Heart left ventricle (tissue), 16 donors: ENCODE measurements at regions of chr22 and their contacts with region 1.

Region 1: DNA sequence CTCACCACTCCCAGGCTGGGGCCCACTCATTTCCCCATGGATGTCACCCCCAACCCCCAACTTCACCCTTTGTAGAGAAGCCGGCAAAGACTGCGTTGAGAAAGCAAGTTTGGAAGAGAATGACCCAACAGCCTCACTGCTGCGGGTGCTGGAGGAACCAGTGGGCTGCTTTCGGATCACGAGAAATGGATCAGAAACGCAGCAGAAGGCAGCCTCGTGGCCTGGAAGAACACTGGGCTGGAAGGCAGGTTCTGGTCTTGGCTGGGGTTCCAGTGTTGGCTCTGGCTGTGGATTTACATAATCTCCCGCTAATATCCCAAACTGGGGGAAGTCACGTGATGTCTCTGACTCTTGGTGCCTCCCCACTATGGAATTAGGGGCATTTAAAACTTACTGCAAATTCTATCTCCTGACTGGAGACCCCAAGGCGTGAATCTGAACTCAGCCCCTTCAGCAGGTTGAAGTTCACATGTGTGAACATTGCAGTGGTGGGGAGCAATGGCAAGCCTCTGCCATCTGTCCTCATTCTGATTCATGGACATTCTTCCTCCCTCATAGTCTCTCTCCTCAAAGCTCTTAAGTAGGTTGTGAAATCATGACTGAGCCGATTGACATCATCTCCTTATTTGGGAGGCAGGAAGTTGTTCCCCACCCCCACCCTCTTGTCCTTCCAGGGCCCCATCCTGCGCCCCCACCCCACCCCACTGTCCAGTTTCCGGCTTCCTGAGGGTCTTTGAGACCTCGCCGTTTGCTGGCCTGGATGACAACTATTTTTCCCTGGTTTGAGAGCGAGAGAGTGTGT is 37.0 kb upstream of the TIMP3 start:
- DNase-seq: peak; percentile 38 to 76 (median 72)
- ATAC-seq: peak; percentile 22 to 81 (median 70)
- H3K4me3 ChIP-seq: no peak overlapping the region
- H3K27ac ChIP-seq: peak overlapping the region; percentile 64 to 89 (median 72)
- H3K4me1 ChIP-seq: peaks cover 5 to 53% (median 33%) of the 10 kb centered on the region in 12 donors
- H3K27me3 ChIP-seq: peaks cover 0 to 3% (median 0%) of the 10 kb centered on the region in 9 donors
- CTCF ChIP-seq: no peak
- POLR2A ChIP-seq: no peak

Region 2: DNA sequence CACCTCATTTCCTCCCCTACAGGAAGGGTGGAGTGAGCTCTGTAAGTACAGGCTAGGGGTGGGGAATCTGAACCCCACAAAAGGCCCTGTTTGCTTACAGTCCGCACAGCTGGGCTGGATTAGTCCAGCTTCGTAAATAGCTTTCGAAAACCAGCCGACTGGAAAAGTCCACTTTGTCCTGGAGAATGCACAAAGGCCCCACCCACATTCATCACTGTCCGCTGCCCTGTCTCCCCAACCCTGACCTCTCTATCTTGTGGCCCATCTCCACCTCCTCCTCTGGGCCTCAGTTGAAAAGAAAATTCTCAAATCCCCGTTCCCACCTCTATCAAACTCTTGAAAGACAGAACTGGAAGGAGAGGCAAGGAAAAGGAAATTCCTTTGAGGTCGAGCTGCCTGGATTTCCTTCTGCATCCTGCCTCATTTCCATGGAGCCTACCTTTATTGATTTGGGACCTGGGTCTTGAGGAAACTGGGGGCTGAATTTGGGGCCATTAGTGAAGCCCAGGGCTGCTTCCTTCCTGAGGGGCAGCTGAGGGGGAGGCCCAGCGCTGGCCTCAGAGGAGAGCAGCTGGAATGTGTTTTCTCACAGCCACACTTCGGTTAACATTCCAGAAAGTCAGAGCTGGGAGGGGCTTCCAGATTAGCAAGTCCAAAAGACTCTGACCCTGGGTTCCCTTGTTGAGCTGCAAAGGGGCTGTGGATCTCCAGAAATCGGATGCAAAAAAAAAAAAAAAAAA is 142.4 kb before region 1 on chr22:
- intact Hi-C with region 1: loop called in 2 of 10 experiments (anchors 5 kb)
- DNase-seq: peak in 4 of 5 donors; percentile 58 to 76 (median 74)
- ATAC-seq: peak; percentile 49 to 66 (median 62)
- H3K4me3 ChIP-seq: no peak overlapping the region
- H3K27ac ChIP-seq: peak overlapping the region; percentile 76 to 98 (median 90)
- H3K4me1 ChIP-seq: peaks cover 17 to 90% (median 64%) of the 10 kb centered on the region in 12 donors
- H3K27me3 ChIP-seq: no peaks in the 10 kb centered on the region
- CTCF ChIP-seq: no peak
- POLR2A ChIP-seq: no peak

Region 3: DNA sequence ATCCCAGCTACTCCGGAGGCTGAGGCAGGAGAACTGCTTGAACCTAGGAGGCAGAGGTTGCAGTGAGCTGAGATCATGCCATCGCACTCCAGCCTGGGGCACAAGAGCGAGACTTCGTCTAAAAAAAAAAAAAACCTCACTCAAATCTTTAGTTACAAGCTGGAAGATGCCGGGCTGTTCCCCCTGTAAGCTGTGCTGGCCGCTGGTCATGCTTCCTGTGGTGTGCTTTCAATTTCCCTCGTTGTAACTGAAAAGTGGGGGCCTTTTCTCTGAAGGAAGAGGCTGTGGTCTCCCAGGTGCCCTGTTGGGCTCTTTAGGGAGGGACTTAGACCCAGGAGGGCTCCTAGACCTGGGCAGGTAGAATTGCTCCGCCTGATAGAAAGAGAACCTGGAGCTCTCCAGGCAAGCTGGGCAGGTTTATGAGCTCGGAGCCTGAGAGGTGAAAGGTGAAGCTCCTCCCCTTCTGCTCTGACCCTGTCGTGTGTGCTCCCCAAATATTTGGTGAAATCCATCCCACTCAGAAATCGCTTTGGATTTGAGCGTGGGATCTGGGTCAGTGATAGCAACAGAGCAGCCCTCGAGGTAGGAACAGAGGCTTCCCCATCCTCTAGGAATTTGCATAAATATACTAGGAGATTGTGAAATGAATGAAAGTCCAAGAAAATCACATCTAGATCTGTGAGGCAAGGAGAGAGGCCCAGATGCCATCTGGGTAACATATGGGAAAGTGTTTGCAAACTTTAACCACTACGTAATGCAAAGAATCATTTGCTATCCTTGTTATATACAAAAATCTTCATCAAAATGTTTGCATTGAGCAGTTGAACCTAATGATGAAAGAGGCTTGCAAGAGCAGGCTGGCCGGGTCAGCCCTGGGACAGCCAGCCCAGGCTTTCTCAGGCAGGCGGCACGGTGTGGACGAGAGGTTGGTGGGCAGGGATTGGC is 135.6 kb before region 1 on chr22:
- intact Hi-C with region 1: loop called in 2 of 10 experiments (anchors 5 kb)
- DNase-seq: no peak
- ATAC-seq: no peak
- H3K4me3 ChIP-seq: no peak overlapping the region
- H3K27ac ChIP-seq: peak overlapping the region; percentile 55 to 96 (median 83)
- H3K4me1 ChIP-seq: peaks cover 9 to 71% (median 36%) of the 10 kb centered on the region in 12 donors
- H3K27me3 ChIP-seq: no peaks in the 10 kb centered on the region
- CTCF ChIP-seq: no peak
- POLR2A ChIP-seq: no peak

Region 4: GRCh38 chr22:32660292-32660691 is 104.2 kb before region 1 on chr22:
- intact Hi-C with region 1: loop called in 1 of 10 experiments (anchors 10 kb)
- DNase-seq: peak; percentile 66 to 79 (median 73)
- ATAC-seq: peak in 3 of 4 donors; percentile 64 to 79 (median 78)
- H3K4me3 ChIP-seq: no peak overlapping the region
- H3K27ac ChIP-seq: peak overlapping the region in 3 of 12 donors; percentile 32 to 69 (median 42)
- H3K4me1 ChIP-seq: peaks cover 0 to 27% (median 0%) of the 10 kb centered on the region in 12 donors
- H3K27me3 ChIP-seq: no peaks in the 10 kb centered on the region
- CTCF ChIP-seq: peak; percentile 66 to 88 (median 74)
- POLR2A ChIP-seq: no peak

Region 5: DNA sequence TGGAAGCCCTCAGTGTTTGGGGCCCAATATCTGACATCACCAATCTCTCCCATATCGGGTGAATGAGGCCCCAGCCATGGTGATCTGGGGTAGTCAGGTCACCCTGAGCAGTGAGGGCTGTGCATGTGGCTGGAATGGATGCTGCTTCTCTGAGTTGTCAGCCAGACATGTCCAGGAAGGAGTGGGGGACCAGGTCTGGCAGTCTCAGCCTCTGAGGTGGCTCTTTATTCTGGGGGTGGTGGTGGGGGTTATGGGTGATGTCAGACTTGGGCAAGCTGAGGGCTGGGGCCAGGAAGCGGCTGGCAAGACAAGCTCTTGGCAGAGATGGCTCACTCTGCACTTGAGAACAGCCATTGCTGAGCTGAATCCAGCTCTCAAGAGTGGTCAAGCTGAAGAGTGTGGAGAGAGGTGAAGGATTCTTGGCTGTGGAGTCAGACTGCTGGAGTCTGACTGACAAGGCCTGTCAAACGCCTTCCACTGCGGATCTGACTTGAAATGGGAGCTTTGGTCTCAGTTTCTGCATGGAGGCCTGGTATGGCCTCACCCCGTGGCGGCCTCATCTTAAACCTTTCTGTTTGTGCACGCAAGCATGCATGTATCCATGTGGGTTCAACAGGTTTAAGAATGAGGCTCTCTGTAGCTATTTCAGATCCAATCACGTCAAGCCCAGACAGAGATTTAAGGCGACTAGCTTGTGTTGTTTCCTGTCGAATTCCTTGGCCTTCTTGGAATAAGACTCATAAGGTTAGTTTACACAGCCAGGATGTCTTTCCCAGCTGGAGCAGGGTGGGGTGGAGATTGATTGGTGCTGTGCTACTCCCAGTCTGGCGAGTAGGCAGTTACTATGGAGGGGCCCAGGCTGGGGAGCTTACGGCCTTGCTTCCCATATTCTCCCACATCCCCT is 46.9 kb before region 1 on chr22:
- intact Hi-C with region 1: loop called in 2 of 10 experiments (anchors 5 kb)
- DNase-seq: peak in 4 of 5 donors; percentile 57 to 71 (median 62)
- ATAC-seq: peak; percentile 62 to 95 (median 79)
- H3K4me3 ChIP-seq: no peak overlapping the region
- H3K27ac ChIP-seq: peak overlapping the region; percentile 9 to 82 (median 71)
- H3K4me1 ChIP-seq: peaks cover 0 to 41% (median 21%) of the 10 kb centered on the region in 12 donors
- H3K27me3 ChIP-seq: no peaks in the 10 kb centered on the region
- CTCF ChIP-seq: no peak
- POLR2A ChIP-seq: no peak

Region 6: DNA sequence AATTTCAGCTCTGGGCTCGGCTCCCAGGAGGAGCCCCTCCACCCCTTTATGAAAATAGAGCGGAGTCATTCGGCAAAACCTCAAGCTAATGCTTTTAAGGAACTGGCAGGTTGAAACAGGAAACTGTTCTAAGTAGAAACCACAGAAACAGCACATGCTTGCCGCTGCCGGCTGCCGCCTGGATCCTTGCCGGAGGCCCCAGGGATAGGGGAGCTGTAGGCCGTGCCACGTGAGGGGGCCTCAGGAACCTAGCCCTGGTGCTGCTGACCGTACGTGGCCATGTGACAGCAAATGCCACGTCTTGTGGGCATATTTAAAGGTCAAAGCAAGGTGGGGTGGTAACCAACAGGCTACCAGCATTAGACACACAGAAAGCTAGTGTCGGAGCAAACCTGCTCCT is 40.9 kb before region 1 on chr22:
- intact Hi-C with region 1: loop called in 2 of 10 experiments (anchors 5 kb)
- DNase-seq: peak; percentile 69 to 87 (median 76)
- ATAC-seq: peak; percentile 68 to 89 (median 82)
- H3K4me3 ChIP-seq: no peak overlapping the region
- H3K27ac ChIP-seq: peak overlapping the region; percentile 12 to 75 (median 46)
- H3K4me1 ChIP-seq: peaks cover 0 to 42% (median 15%) of the 10 kb centered on the region in 12 donors
- H3K27me3 ChIP-seq: no peaks in the 10 kb centered on the region
- CTCF ChIP-seq: no peak
- POLR2A ChIP-seq: no peak